Heart right ventricle (tissue), 16 donors: ENCODE measurements at regions of chr6 and their contacts with region 1.

Region 1: GRCh38 chr6:163180874-163181541 is 233.5 kb upstream of the QKI start:
- DNase-seq: peak; percentile 82 to 83
- ATAC-seq: peak; percentile 94 to 97 (median 96)
- H3K4me3 ChIP-seq: peak overlapping the region in 5 of 10 donors; percentile 2 to 31 (median 26)
- H3K27ac ChIP-seq: peak overlapping the region in 6 of 10 donors; percentile 5 to 33 (median 25)
- H3K4me1 ChIP-seq: peaks cover 4 to 36% (median 23%) of the 10 kb centered on the region in 9 donors
- H3K27me3 ChIP-seq: no peaks in the 10 kb centered on the region
- CTCF ChIP-seq: peak; percentile 74 to 96 (median 91)

Region 2: GRCh38 chr6:163085861-163086623 is 95.0 kb before region 1 on chr6:
- intact Hi-C with region 1: no loop called
- DNase-seq: peak in 1 of 2 donors; percentile 16
- ATAC-seq: peak; percentile 44 to 91 (median 84)
- H3K4me3 ChIP-seq: peak overlapping the region in 1 of 10 donors; percentile 37
- H3K27ac ChIP-seq: peak overlapping the region in 8 of 10 donors; percentile 45 to 75 (median 58)
- H3K4me1 ChIP-seq: peaks cover 0 to 16% (median 0%) of the 10 kb centered on the region in 9 donors
- H3K27me3 ChIP-seq: no peaks in the 10 kb centered on the region
- CTCF ChIP-seq: no peak

Region 3: GRCh38 chr6:163324411-163325389 is 143.7 kb after region 1 on chr6:
- intact Hi-C with region 1: loop called in 2 of 10 experiments (anchors 10 kb)
- DNase-seq: peak in 1 of 2 donors; percentile 51
- ATAC-seq: peak in 7 of 8 donors; percentile 39 to 75 (median 53)
- H3K4me3 ChIP-seq: no peak overlapping the region
- H3K27ac ChIP-seq: peak overlapping the region in 2 of 10 donors; percentile 8 to 29
- H3K4me1 ChIP-seq: peaks cover 0 to 38% (median 33%) of the 10 kb centered on the region in 9 donors
- H3K27me3 ChIP-seq: no peaks in the 10 kb centered on the region
- CTCF ChIP-seq: no peak

Region 4: DNA sequence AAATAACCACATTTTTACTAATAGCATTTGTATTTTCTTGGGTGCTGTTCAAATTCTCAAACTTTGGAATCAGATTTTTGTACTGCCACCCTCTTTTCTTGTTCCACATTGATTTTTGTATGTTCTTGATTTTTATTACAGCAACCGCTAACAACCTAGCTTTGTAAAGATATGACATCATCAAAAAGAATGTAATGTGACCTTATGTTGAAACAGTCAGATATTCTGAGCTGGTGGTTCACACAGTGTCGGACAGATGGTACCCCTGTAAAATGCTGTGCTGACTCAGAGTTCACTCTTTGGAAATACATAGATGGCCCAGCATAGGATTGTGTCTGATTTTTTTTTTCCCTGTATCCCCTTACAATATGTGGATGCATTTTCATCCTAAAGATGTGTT is 352.4 kb after region 1 on chr6:
- intact Hi-C with region 1: loop called in 1 of 10 experiments (anchors 10 kb)
- DNase-seq: no peak
- ATAC-seq: peak in 3 of 8 donors; percentile 47 to 86 (median 63)
- H3K4me3 ChIP-seq: no peak overlapping the region
- H3K27ac ChIP-seq: peak overlapping the region in 6 of 10 donors; percentile 5 to 39 (median 24)
- H3K4me1 ChIP-seq: peaks cover 8 to 98% (median 88%) of the 10 kb centered on the region in 9 donors
- H3K27me3 ChIP-seq: no peaks in the 10 kb centered on the region
- CTCF ChIP-seq: no peak

Region 5: DNA sequence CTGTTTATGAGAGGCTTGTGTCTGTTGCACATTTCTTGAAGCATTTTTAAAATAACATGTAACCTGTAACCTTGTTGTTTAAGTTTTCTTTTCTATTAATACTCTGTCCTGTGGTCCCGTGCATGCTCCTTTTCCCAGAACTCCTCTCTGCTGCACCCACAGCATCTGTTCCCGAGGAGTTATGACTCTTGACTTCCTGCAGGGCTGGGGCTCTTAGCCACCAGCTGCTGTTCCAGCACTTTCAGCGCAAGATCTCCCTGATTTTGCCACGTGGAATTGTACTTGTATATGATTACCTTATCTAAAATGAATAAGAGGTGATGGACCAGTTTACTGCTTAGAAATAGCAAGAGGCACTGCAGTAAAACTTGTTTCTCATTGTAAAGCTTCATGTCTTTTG is 384.1 kb after region 1 on chr6:
- intact Hi-C with region 1: loop called in 2 of 10 experiments (anchors 10 kb)
- DNase-seq: no peak
- ATAC-seq: peak in 5 of 8 donors; percentile 48 to 70 (median 64)
- H3K4me3 ChIP-seq: no peak overlapping the region
- H3K27ac ChIP-seq: peak overlapping the region in 3 of 10 donors; percentile 5 to 40 (median 26)
- H3K4me1 ChIP-seq: peaks cover 0 to 75% (median 61%) of the 10 kb centered on the region in 9 donors
- H3K27me3 ChIP-seq: no peaks in the 10 kb centered on the region
- CTCF ChIP-seq: no peak

Region 6: GRCh38 chr6:164927288-164928056 is 1746.5 kb after region 1 on chr6:
- intact Hi-C with region 1: loop called in 3 of 10 experiments (anchors 10 kb)
- DNase-seq: peak; percentile 48 to 74
- ATAC-seq: peak; percentile 83 to 96 (median 92)
- H3K4me3 ChIP-seq: peak overlapping the region in 3 of 10 donors; percentile 10 to 18 (median 14)
- H3K27ac ChIP-seq: no peak overlapping the region
- H3K4me1 ChIP-seq: peaks cover 0 to 13% (median 7%) of the 10 kb centered on the region in 9 donors
- H3K27me3 ChIP-seq: no peaks in the 10 kb centered on the region
- CTCF ChIP-seq: peak; percentile 94 to 100 (median 97)